ENCODE measurements at regions of chr19 and their contacts with region 1.

Region 1: GRCh38 chr19:33819880-33820781 is 23.5 kb downstream of the KCTD15 start:
- DNase-seq: peak; percentile 92
- H3K4me3 Mint-ChIP-seq: peak overlapping the region; percentile 80
- H3K27ac Mint-ChIP-seq: peak overlapping the region; percentile 79
- H3K4me1 Mint-ChIP-seq: peaks cover 23% of the 10 kb centered on the region
- H3K27me3 Mint-ChIP-seq: peaks cover 3% of the 10 kb centered on the region

Region 2: DNA sequence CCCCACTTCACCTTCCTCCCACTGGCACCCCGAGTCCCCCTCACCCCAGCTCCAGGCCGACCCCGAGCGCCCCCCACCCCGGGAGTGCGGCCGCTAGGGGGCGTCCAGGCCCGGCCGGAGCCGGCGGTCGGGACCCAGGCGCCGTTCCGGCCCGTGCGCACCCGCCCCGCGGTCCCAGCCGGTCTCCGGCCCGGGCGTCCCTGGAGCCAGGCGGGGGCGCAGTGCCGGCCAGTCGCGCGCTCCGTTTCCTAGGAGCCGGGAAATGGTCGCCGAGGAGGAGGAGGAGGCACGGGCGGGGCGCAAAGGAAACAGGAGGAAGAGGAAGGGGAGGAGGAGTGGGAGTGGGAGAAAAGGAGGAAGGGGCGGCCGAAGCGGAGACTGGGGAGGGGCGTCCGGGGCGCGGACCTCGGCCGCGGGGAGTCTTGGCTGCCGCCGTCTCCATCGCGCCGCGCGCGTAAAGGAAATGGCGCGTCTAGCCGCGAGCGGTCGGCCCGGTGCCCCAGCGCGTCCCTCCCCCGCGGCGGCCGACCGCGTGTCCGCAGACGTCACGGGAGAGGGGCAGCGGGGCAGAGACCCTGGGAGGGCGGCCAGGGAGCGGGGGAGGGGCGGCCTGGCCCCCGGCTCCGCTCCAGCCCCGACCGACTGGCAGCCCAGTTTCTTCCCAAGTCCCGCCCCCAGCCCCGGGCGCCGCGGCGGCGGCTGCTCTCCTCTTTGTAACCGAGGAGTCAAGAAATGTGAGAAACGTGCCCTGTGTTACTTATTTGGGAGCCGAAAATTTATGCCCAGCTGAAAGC is 24.6 kb before region 1 on chr19:
- intact Hi-C with region 1: loop called (anchors 2 kb)
- DNase-seq: peak; percentile 87
- H3K4me3 Mint-ChIP-seq: peak overlapping the region; percentile 79
- H3K27ac Mint-ChIP-seq: peak overlapping the region; percentile 77
- H3K4me1 Mint-ChIP-seq: peaks cover 1% of the 10 kb centered on the region
- H3K27me3 Mint-ChIP-seq: peaks cover 38% of the 10 kb centered on the region

Measured in activated CD4-positive, alpha-beta T cell treated with anti-CD3 and anti-CD28 coated beads, Interleukin-2, amount 10 ng/mL, durations not matched to agents 24 days and 14 days (primary cell).